Activated naive CD4-positive, alpha-beta T cell treated with anti-CD3 and anti-CD28 coated beads for 36 hours (primary cell): ENCODE measurements at regions of chrX and their contacts with region 1.

Region 1: GRCh38 chrX:80578517-80579105 is 158.4 kb downstream of the TENT5D start:
- DNase-seq: no peak
- H3K4me3 Mint-ChIP-seq: no peak overlapping the region
- H3K27ac Mint-ChIP-seq: no peak overlapping the region
- H3K4me1 Mint-ChIP-seq: no peaks in the 10 kb centered on the region
- H3K27me3 Mint-ChIP-seq: no peaks in the 10 kb centered on the region

Region 2: DNA sequence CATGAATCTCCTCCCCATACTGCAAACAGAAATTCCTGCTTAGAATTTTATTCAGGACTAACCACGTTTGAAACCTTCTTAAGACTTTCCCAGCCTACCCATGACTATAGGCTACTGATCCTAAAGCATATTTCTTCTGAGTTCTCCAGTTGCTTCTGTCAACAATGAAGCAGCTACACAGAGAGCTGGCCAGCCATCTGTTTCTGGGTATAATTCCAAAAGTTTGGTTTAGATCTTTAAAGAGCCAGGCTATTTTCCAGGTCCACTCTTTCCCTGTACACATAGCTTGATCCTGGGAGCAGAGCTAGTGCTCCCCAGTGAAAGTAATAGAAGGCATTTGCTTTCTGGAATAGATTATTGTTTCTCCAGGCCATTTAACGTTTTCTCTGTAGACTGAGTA is 1207.5 kb before region 1 on chrX:
- CTCF ChIA-PET with region 1: no interaction called
- intact Hi-C with region 1: no loop called
- DNase-seq: no peak
- H3K4me3 Mint-ChIP-seq: no peak overlapping the region
- H3K27ac Mint-ChIP-seq: no peak overlapping the region
- H3K4me1 Mint-ChIP-seq: peaks cover 35% of the 10 kb centered on the region
- H3K27me3 Mint-ChIP-seq: no peaks in the 10 kb centered on the region

Region 3: DNA sequence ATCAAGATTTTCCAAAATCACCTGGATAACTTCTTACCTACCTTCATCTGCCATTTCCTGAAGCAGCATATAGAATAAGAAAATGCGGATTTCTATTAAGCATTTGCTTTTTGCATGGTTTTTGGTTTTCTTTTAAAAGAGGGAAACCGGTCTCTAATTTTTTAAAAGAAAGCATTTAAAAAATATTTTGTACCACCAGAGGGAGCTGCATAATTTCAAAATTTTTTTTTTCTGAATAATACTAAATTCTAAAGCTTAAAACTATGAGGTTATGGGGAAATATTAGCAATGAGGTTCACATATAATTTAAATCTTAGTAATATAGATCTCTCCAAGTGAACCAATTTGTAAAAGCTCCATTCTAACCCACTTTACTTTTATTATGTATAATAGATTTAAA is 296.1 kb before region 1 on chrX:
- CTCF ChIA-PET with region 1: interaction called, 3 read pairs
- intact Hi-C with region 1: loop called (anchors 5 kb)
- DNase-seq: no peak
- H3K4me3 Mint-ChIP-seq: no peak overlapping the region
- H3K27ac Mint-ChIP-seq: no peak overlapping the region
- H3K4me1 Mint-ChIP-seq: no peaks in the 10 kb centered on the region
- H3K27me3 Mint-ChIP-seq: no peaks in the 10 kb centered on the region

Region 4: DNA sequence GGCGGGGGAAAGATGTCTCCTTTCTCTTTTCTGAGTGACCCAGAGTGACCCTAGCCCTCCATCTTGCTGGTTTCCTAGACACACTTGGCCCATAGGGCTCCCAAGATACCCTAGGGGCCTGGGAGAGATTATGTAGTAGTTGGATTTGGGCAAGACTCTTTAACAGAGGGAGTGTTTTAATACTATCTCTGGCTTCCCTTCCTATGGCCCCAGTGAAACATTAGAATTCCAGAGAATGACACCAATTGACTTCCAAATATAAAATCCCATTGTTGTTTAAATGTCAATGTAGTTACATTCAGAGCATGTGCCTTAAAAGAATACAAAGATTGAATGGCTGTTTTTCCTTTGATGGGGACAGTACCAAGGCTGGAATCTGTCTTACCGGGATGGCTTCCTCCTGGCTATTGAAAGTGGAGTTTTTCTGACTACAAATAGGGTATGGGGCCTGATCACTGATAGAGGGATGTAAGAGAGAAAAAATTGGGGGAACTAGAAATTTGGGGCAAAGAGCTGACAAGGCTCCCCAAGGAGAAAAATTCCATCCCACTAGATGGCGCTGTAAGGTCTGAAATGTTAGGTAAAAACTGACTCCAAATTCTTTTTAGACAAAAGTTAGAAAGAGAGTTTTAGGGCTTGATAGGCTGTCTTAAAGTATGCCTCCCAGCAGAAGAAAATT is 147.6 kb before region 1 on chrX:
- CTCF ChIA-PET with region 1: no interaction called
- intact Hi-C with region 1: loop called (anchors 2 kb)
- DNase-seq: peak; percentile 14
- H3K4me3 Mint-ChIP-seq: no peak overlapping the region
- H3K27ac Mint-ChIP-seq: no peak overlapping the region
- H3K4me1 Mint-ChIP-seq: no peaks in the 10 kb centered on the region
- H3K27me3 Mint-ChIP-seq: no peaks in the 10 kb centered on the region

Region 5: DNA sequence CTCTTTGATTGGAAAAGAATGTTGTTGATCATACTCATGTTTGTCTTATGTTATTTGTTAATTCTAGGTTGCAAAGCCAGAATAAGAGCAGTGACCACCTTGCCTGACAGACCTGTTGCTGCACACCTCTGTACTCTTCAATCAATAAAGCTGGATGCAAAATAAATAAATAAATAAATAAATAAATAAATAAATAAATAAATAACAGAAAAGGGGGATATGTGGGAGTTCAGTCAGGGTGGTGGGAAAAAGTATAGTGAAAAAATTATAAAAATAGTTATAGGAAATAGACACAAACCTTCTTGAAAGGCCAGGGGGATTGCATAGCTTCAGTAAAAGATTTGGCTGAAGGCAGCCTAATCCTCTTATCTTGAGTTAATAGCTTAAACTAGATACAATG is 107.0 kb before region 1 on chrX:
- CTCF ChIA-PET with region 1: no interaction called
- intact Hi-C with region 1: no loop called
- DNase-seq: no peak
- H3K4me3 Mint-ChIP-seq: no peak overlapping the region
- H3K27ac Mint-ChIP-seq: no peak overlapping the region
- H3K4me1 Mint-ChIP-seq: no peaks in the 10 kb centered on the region
- H3K27me3 Mint-ChIP-seq: no peaks in the 10 kb centered on the region